ENCODE measurements at regions of chr13 and their contacts with region 1.

Region 1: GRCh38 chr13:102800145-102801041 is 1.5 kb downstream of the BIVM start:
- DNase-seq: peak; percentile 58 to 92 (median 69)
- ATAC-seq: peak; percentile 90
- H3K4me3 ChIP-seq: peak overlapping the region; percentile 74
- H3K4me3 Mint-ChIP-seq: peak overlapping the region; percentile 80 to 98 (median 87)
- H3K27ac ChIP-seq: no peak overlapping the region
- H3K27ac Mint-ChIP-seq: peak overlapping the region in 8 of 9 donors; percentile 11 to 90 (median 47)
- H3K4me1 ChIP-seq: peaks cover 6% of the 10 kb centered on the region in 2 donors
- H3K4me1 Mint-ChIP-seq: peaks cover 6 to 42% (median 19%) of the 10 kb centered on the region in 7 donors
- H3K27me3 ChIP-seq: peaks cover 0 to 3% of the 10 kb centered on the region in 2 donors
- H3K27me3 Mint-ChIP-seq: peaks cover 0 to 28% (median 17%) of the 10 kb centered on the region in 5 donors

Region 2: DNA sequence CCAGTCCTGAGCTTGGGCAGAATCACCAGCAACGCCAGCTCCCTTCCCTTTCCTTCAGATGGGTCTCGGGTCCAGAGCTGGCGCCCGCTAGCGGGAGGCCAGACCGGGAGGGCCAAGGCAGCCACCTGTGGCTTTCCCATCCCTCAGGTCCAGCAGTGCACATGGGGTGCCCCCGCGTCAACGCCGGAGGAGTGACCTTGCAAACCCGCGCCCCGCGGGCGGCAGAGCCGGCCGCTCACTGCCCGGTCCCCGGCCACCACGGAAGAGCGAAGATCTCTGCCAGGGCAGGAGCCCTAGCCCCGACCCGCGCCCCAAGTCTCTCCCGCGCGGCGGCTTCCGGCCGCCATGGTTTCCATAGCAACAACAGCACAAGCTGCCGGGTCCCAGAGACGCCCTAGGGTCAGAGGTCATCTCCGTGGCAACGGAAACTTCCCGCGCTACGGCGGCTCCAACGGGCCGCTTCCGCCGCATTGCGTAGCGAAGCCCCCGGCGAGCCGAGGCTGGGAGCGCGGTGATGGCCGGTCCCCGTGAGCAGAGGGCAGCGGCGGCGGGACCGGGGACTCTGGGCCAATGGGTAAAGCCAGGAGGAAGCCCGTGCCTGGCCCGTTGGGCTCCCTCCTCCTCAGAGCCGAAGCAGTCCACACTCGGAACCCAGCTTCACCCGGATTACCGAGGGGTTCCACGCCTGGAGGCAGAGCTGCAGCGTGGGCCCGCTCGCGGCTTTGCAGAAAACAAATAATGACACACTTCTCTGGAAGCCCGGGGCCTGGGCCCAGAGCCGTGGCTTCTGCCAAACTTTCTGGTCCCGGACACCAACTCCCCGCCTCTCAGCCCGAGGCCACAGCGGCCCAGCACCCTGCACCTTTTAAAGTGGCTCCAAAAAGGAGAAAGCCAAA is 406.0 kb before region 1 on chr13:
- CTCF ChIA-PET with region 1: no interaction called
- POLR2A ChIA-PET with region 1: no interaction called
- intact Hi-C with region 1: loop called in 1 of 2 experiments (anchors 5 kb)
- DNase-seq: peak; percentile 91 to 98 (median 95)
- ATAC-seq: peak; percentile 94
- H3K4me3 ChIP-seq: peak overlapping the region; percentile 96
- H3K4me3 Mint-ChIP-seq: peak overlapping the region; percentile 85 to 93 (median 90)
- H3K27ac ChIP-seq: peak overlapping the region; percentile 78
- H3K27ac Mint-ChIP-seq: peak overlapping the region in 8 of 9 donors; percentile 82 to 94 (median 88)
- H3K4me1 ChIP-seq: peaks cover 0 to 12% of the 10 kb centered on the region in 2 donors
- H3K4me1 Mint-ChIP-seq: peaks cover 6 to 25% (median 20%) of the 10 kb centered on the region in 7 donors
- H3K27me3 ChIP-seq: no peaks in the 10 kb centered on the region
- H3K27me3 Mint-ChIP-seq: peaks cover 13 to 41% (median 22%) of the 10 kb centered on the region in 5 donors

Region 3: DNA sequence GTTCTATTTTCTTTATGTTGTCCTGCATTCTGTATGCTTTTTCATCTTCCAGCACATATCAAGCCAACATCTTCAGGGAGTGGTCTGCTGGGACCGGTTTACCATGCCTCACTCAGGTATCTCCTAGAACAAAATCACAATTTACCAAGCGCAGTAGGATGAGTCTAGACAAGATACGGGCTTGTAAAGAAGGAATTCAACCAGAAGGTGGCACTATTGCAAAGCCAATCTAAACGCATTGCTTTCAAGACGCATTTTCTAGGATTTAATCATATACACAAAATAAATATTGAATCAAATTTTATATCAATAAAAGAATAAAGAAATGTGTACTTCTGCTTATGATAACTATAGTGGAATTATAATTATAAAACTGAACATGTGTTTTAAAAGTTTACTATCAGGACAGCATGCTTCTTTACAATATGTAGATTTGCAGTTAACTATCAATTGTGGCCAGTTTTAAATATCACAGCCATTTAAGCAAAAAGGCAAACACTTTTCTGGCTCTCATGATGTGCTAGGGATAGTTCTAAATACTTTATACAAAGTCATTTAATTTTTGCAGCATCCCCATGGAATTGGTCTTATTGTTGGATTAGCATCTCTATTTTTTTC is 219.7 kb before region 1 on chr13:
- CTCF ChIA-PET with region 1: interaction called, 3 read pairs
- POLR2A ChIA-PET with region 1: no interaction called
- intact Hi-C with region 1: loop called (anchors 1 kb)
- DNase-seq: peak in 7 of 9 donors; percentile 37 to 70 (median 63)
- ATAC-seq: peak; percentile 85
- H3K4me3 ChIP-seq: no peak overlapping the region
- H3K4me3 Mint-ChIP-seq: no peak overlapping the region
- H3K27ac ChIP-seq: no peak overlapping the region
- H3K27ac Mint-ChIP-seq: peak overlapping the region in 1 of 9 donors; percentile 57
- H3K4me1 ChIP-seq: peaks cover 0 to 8% of the 10 kb centered on the region in 2 donors
- H3K4me1 Mint-ChIP-seq: peaks cover 8 to 14% (median 10%) of the 10 kb centered on the region in 7 donors
- H3K27me3 ChIP-seq: no peaks in the 10 kb centered on the region
- H3K27me3 Mint-ChIP-seq: peaks cover 4 to 26% (median 5%) of the 10 kb centered on the region in 5 donors

Region 4: DNA sequence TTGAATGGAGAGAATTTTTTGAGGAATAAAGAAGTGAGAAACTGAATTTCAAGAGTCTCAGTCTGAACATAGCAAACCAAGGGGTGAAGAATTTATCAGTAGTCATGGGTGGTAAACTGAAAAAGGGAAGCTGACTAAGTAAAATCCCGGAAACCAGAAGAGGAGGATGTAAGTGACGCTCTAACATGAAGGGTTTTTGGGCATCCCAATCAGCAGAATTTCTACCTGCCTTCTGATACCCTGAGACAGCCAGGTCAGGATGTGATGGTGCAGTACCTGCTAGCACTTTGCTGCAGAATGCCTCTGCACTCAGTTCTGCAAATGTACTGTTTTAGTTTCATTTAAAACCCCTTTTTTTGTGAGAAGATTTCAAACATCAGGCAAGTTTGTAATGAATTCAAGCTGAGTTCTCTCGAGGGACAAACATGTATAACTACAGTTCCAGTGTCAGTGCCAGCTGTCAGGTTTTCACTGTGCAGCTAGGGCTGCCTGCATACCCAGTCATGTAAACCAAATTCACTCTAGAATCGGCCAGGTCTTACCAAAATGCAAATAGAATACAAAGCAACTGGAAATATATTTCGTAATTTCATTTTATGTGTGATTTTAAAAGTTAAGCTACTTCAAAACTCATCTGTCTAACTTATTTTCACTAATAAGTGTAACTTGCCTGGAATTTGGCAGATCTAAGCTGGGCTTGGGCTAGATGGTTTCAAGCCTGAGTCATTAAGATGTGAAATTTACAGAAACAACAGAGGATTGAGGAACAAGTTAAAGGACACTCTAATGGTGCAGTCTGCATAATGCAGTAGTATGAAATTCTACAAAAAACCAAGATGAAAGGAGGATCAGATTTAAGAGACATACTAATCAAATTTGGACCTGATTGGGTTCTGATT is 119.3 kb before region 1 on chr13:
- CTCF ChIA-PET with region 1: no interaction called
- POLR2A ChIA-PET with region 1: no interaction called
- intact Hi-C with region 1: loop called in 1 of 2 experiments (anchors 5 kb)
- DNase-seq: peak in 5 of 9 donors; percentile 2 to 37 (median 34)
- ATAC-seq: peak; percentile 74
- H3K4me3 ChIP-seq: no peak overlapping the region
- H3K4me3 Mint-ChIP-seq: peak overlapping the region in 2 of 10 donors; percentile 5 to 57
- H3K27ac ChIP-seq: no peak overlapping the region
- H3K27ac Mint-ChIP-seq: peak overlapping the region; percentile 14 to 81 (median 58)
- H3K4me1 ChIP-seq: peaks cover 0 to under 1% of the 10 kb centered on the region in 2 donors
- H3K4me1 Mint-ChIP-seq: peaks cover 14 to 33% (median 21%) of the 10 kb centered on the region in 7 donors
- H3K27me3 ChIP-seq: no peaks in the 10 kb centered on the region
- H3K27me3 Mint-ChIP-seq: no peaks in the 10 kb centered on the region

Region 5: DNA sequence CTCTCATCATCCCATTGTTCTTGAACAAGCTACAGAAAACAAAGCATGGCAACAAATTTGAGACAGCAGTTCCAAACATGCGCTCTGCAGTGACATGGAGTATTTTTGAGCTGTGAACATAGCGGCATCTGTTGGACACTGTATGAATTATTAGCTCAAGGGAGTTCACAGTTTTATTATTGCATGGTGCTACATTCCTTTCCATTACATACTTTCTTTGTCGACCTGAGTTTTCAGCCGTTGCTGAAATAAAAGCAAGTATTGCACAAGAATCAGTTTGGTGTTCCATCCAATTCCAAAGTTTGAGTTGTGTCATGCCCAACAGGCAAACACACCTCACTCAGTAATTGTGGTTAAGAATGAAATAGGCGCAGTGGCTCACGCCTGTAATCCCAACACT is 75.5 kb before region 1 on chr13:
- CTCF ChIA-PET with region 1: no interaction called
- POLR2A ChIA-PET with region 1: no interaction called
- intact Hi-C with region 1: loop called in 1 of 2 experiments (anchors 1 kb)
- DNase-seq: peak in 1 of 9 donors; percentile 6
- ATAC-seq: peak; percentile 54
- H3K4me3 ChIP-seq: no peak overlapping the region
- H3K4me3 Mint-ChIP-seq: no peak overlapping the region
- H3K27ac ChIP-seq: no peak overlapping the region
- H3K27ac Mint-ChIP-seq: no peak overlapping the region
- H3K4me1 ChIP-seq: no peaks in the 10 kb centered on the region
- H3K4me1 Mint-ChIP-seq: peaks cover 0 to 3% (median 0%) of the 10 kb centered on the region in 7 donors
- H3K27me3 ChIP-seq: no peaks in the 10 kb centered on the region
- H3K27me3 Mint-ChIP-seq: peaks cover 8 to 40% (median 26%) of the 10 kb centered on the region in 5 donors

Region 6: GRCh38 chr13:102757006-102757405 is 43.4 kb before region 1 on chr13:
- CTCF ChIA-PET with region 1: no interaction called
- POLR2A ChIA-PET with region 1: no interaction called
- intact Hi-C with region 1: no loop called
- DNase-seq: no peak
- ATAC-seq: no peak
- H3K4me3 ChIP-seq: no peak overlapping the region
- H3K4me3 Mint-ChIP-seq: no peak overlapping the region
- H3K27ac ChIP-seq: no peak overlapping the region
- H3K27ac Mint-ChIP-seq: no peak overlapping the region
- H3K4me1 ChIP-seq: no peaks in the 10 kb centered on the region
- H3K4me1 Mint-ChIP-seq: no peaks in the 10 kb centered on the region
- H3K27me3 ChIP-seq: no peaks in the 10 kb centered on the region
- H3K27me3 Mint-ChIP-seq: peaks cover 0 to 5% (median 3%) of the 10 kb centered on the region in 5 donors

Region 7: DNA sequence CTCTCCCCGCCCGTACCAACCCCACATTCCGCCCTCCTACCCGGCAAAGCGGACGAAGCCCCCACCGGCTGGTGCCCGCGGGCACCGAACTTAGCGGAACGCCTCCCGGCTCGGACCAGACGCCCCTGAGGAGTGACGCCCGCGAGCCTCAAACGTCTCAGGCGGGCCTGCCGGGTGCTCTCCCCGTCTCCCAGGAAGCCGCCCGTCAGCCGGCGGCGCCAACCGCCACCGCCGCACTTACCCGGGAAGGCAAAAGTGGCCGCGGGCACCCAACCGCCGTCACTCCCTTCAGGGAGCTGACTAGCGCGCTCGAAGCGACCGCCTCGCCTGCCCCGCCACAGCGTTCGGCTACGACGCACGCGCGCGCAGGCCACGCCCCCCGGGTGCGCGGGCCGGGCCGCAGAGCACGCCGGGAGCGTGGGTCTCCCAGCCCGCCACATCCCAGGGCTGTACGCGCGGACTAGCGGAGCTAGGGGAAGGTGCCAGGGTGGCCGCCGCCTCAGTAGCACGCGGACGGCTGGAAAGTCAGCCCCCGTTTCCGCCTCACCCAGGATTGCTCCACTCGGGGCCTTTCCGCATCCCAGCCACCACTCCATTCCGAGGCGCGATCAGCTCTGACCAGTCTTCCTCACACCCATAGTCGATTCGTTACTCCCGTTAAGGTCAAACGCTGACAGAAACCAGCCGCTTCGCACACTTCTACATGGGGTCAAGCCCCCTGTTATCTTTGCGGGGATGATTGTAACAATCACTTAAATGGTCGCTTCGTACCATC is 26.8 kb before region 1 on chr13 and contains the start of gene TEX30:
- CTCF ChIA-PET with region 1: interaction called, 3 read pairs
- POLR2A ChIA-PET with region 1: no interaction called
- intact Hi-C with region 1: loop called (anchors 1 kb)
- DNase-seq: peak; percentile 78 to 95 (median 91)
- ATAC-seq: peak; percentile 98
- H3K4me3 ChIP-seq: peak within 1 kb of the TSS; percentile 89
- H3K4me3 Mint-ChIP-seq: peak within 1 kb of the TSS; percentile 87 to 97 (median 94)
- H3K27ac ChIP-seq: peak within 1 kb of the TSS; percentile 79
- H3K27ac Mint-ChIP-seq: peak within 1 kb of the TSS; percentile 87 to 97 (median 94)
- H3K4me1 ChIP-seq: peaks cover 2 to 7% of the 10 kb centered on the region in 2 donors
- H3K4me1 Mint-ChIP-seq: peaks cover 15 to 56% (median 46%) of the 10 kb centered on the region in 7 donors
- H3K27me3 ChIP-seq: no peaks in the 10 kb centered on the region
- H3K27me3 Mint-ChIP-seq: no peaks in the 10 kb centered on the region
- total RNA-seq, gene TEX30: 3.7 to 30.8 (median 8.3) TPM

Region 8: GRCh38 chr13:102779436-102780159 is 20.8 kb before region 1 on chr13:
- CTCF ChIA-PET with region 1: interaction called, 3 read pairs
- POLR2A ChIA-PET with region 1: no interaction called
- intact Hi-C with region 1: loop called in 1 of 2 experiments (anchors 1 kb)
- DNase-seq: peak in 4 of 9 donors; percentile 11 to 41 (median 17)
- ATAC-seq: peak; percentile 80
- H3K4me3 ChIP-seq: no peak overlapping the region
- H3K4me3 Mint-ChIP-seq: peak overlapping the region in 7 of 10 donors; percentile 3 to 78 (median 22)
- H3K27ac ChIP-seq: no peak overlapping the region
- H3K27ac Mint-ChIP-seq: peak overlapping the region; percentile 1 to 93 (median 51)
- H3K4me1 ChIP-seq: peaks cover 6 to 18% of the 10 kb centered on the region in 2 donors
- H3K4me1 Mint-ChIP-seq: peaks cover 12 to 42% (median 25%) of the 10 kb centered on the region in 7 donors
- H3K27me3 ChIP-seq: no peaks in the 10 kb centered on the region
- H3K27me3 Mint-ChIP-seq: no peaks in the 10 kb centered on the region

Region 9: GRCh38 chr13:103046676-103047075 is 246.3 kb after region 1 on chr13:
- CTCF ChIA-PET with region 1: no interaction called
- POLR2A ChIA-PET with region 1: no interaction called
- intact Hi-C with region 1: no loop called
- DNase-seq: no peak
- ATAC-seq: no peak
- H3K4me3 ChIP-seq: no peak overlapping the region
- H3K4me3 Mint-ChIP-seq: no peak overlapping the region
- H3K27ac ChIP-seq: no peak overlapping the region
- H3K27ac Mint-ChIP-seq: no peak overlapping the region
- H3K4me1 ChIP-seq: no peaks in the 10 kb centered on the region
- H3K4me1 Mint-ChIP-seq: no peaks in the 10 kb centered on the region
- H3K27me3 ChIP-seq: no peaks in the 10 kb centered on the region
- H3K27me3 Mint-ChIP-seq: peaks cover 0 to 10% (median 6%) of the 10 kb centered on the region in 5 donors